Left cardiac atrium (tissue), 4 donors: ENCODE measurements at regions of chr5 and their contacts with region 1.

Region 1: DNA sequence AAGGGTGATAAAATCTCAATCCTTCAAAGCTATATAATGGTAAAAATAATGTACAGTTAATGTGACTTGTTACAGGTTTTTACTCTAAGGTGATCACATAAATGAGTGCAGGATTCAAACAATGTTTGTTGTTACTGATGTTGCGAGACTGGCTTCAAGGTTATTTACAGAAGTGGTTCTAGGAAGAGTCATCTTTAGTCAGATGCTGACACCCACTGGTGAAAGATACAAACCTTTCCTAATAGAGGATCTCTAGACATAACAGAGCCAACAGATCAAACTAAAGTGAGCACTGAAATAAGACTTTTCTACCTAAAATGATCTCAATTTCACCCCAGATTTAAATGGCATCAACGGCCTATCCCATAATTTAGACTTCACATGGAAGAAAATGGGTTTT is 20.2 kb downstream of the ARSB start:
- DNase-seq: no peak
- ATAC-seq: peak; percentile 78 to 87

Region 2: DNA sequence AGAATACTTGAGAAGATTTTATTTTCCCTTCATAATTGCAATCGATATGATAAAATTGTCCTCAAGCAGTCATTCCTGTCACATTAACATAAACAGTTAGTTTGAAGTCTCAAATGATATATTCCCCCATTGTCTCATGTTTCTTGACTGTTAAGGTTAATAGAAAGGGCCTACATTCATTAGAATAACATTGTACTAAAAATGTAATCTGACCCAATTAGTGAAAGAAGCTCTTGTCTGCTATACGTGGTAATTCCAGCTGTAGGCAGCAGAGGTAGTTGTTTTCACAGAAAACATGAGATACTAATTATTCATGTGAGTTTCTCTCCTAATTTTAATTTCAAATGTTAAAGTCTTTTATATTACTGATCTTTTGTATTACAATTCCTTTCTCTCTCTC is 644.5 kb before region 1 on chr5:
- intact Hi-C with region 1: loop called (anchors 5 to 10 kb)
- DNase-seq: no peak
- ATAC-seq: no peak

Region 3: DNA sequence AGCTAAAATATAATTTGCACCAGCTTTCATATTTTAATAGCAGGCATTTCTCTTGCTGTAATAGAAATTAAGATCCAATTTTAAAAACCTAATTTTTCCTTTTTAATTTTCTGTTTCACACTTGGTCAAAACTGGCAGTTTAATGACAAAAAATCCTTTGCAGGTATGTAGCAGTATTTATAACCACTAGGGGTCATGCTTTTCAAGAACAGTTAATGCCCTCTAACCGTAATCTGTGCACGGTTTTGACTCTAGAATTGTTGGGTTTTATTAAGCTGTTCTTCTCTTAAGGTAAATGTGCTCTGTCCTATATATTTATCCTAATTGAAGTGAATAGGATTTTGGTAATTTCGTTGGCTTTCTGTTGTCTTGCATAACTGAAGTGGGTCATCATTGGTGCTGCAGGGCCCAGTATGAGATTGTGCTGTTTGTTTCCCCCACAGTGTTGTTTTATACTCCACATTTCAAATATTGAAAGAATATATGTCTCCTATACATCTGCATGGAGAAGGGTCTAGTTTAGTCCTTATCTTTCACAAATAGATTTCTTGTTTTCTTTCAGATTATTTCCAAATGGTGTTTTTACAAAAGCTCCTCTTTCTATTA is 497.0 kb before region 1 on chr5:
- intact Hi-C with region 1: loop called in 1 of 2 experiments (anchors 5 kb)
- DNase-seq: no peak
- ATAC-seq: peak; percentile 57 to 74

Region 4: DNA sequence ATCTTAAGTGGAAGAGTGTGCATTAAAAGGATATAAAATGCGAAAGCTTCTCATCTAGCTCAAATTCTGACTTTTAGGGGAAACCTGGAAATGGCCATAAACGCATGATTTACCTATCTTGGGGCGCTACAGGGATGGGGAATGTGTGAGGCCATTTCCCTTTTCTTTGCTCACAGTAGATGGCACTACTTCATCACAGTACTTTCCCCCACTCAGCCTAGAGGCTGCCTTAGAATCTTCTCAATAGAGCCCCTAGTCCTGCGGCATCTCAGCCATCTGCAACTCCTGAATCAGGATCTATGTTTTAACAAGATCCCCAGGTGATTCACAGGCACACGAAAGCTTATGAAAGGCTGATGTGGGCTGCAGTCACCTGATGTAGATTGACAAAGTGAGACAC is 427.1 kb before region 1 on chr5:
- intact Hi-C with region 1: loop called (anchors 5 kb)
- DNase-seq: no peak
- ATAC-seq: peak; percentile 52 to 80

Region 5: DNA sequence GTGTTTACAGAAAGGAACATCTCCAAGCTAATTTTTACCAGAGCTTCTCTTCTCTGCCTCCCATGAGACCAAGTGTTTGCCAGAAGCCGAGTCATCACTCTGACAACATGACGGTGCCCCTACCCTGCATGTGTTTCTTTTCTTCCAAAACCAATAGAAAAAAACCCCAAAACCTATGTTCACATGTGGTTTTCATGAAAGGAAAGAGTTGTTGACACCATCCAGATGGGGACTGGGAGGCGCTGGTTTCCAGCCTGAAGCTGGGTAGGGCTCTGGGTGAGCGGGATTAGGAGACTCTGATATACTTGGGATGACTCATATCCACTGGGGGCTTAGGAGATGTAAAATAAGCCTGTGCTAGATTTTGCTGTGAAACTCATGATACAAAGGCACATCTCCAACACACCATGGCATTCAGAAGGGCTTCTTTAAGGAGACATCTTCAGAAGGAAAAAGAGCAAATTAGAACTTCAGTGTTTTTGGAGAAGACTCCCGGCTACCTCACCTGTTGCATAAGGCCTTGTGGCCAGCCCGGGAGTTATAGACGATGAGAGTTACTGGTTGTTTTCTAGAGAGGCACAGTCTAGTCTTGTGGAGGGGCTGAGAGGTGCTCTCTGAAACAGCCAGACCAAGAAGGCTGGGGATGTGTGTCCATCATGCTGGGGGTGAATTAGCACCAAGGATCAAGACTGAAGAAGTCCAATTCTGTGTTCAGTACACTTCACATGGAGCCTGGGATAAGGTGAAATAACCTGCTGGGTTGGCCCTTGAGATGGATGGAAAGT is 207.4 kb before region 1 on chr5:
- intact Hi-C with region 1: no loop called
- DNase-seq: peak; percentile 43
- ATAC-seq: peak in 1 of 2 donors; percentile 90

Region 6: DNA sequence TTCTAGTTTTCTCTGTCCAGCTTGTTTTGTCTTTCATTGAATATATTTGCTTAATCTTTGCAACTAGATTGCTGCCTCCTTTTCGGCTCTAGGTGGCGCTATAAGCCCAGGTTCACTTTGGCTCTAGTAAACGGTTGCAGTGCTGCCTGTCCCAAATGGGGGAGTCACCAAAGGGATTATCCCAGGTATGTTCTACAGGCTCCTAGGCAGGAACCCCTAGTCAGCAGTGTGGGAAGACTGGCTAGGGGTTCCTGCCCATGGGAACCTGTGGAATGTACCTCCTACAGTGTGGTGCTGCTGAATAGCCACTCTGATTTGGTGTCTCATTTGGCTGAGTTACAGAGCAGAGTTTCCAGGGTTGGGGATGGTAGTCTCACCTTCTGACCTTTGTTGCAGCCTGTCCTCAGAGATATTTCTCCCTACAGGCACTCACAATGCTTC is 64.9 kb before region 1 on chr5:
- intact Hi-C with region 1: loop called (anchors 5 to 10 kb)
- DNase-seq: no peak
- ATAC-seq: no peak

Region 7: DNA sequence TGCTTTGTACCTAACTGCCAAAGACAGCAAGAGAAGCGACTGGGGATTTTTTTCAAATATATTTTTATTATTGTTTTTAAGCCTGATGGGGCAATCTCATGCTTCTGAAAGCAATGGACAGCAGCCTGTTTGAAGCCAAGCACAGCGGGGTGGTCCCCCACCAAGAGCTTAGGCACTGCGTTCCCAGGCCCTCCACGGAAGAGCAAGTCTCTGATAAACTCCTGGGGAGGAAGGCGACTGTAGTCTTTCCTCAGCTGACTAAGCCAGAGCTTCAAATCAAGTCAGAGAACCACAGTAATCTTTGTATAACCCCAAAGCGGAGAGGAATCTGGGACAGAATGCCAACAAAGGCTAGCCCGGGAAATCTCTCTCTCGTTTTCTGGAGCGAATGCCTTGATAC is 34.2 kb before region 1 on chr5:
- intact Hi-C with region 1: no loop called
- DNase-seq: peak; percentile 26
- ATAC-seq: peak; percentile 45 to 47

Region 8: GRCh38 chr5:79582186-79582585 is 617.3 kb after region 1 on chr5:
- intact Hi-C with region 1: no loop called
- DNase-seq: no peak
- ATAC-seq: no peak